ENCODE measurements at regions of chr11 and their contacts with region 1.

Region 1: DNA sequence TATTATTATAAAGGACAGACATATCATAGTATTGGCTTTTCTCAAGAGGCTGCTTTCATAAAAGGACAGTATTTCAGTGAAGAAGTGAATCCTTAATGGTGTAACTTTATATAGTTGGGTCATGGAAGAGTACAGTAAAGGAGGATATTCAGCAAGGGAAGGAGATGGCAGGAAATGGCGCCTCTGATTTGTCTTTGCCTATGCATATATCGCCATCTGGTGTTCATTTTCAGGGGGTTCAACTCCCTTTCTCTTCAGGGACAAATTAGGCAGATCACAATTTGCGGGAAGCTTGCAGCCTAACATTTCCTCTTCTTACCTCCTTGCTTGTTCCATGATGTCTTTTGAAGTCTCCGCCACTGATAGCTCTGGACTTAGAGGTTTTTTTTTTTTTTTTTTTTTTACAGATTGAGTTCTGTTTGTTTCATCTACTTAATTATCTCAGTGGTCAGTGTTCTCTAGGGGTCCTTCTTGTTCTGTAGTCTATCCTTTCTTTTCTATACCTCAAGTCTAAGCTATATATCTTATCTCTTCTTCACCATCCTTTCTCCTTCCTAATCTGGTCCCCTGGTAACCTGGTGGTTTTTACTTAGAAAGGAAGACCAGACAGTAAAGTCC is 21.8 kb upstream of the RRM1 start:
- DNase-seq: peak; percentile 81
- H3K4me3 Mint-ChIP-seq: no peak overlapping the region
- H3K27ac Mint-ChIP-seq: no peak overlapping the region
- H3K4me1 Mint-ChIP-seq: peaks cover 10% of the 10 kb centered on the region
- H3K27me3 Mint-ChIP-seq: no peaks in the 10 kb centered on the region
- CTCF ChIP-seq: peak; percentile 73

Region 2: DNA sequence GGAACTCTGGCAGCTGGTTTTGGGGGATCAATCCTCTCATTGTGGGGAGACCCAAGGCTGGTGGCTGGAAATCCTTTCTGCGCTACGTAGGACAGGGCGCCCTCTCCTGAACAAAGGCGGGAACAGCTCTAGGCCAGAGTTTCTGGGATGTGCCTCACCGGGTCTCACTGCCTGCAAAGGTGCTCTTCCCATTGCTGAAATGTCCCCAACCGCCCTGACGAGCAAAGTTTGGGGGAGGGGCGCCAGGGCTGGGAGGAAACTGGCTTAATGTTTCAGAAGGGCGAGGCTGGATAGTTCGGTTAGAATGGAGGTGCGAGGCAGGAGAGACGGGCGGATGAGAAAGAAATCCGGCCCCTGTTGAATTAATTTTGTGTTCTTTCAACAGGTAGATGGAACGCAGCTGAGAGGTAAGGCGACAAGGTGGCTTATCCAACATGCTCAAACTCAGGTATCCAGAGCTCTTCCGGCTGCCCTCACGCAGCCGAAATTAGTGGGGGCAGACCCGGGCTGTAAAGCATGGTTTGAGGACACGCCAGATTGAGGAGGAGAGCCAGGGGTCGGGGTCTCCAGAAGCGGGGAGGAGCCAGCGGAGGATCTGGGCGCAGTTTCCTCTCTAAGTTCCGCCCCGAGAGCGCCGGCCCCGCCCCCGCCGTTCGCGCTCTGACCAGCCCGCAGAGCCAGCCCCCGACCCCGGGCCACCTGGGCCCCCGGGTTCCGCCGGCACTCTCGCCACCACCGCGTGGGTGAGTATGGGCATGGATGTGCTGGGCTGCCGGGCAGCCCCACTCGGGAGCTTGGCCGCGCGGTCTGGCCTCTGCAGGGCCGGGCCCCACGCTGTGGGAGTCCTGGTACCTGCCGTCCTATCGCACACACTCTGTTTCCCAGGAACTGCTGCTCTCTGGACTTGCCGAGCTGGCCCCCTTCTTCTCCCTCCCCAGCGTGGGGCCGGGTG is 264.6 kb before region 1 on chr11 and contains the start of gene PGAP2:
- CTCF ChIA-PET with region 1: interaction called, 13 read pairs
- POLR2A ChIA-PET with region 1: interaction called, 4 read pairs
- intact Hi-C with region 1: no loop called
- DNase-seq: peak; percentile 77
- H3K4me3 Mint-ChIP-seq: peak within 1 kb of the TSS; percentile 81
- H3K27ac Mint-ChIP-seq: peak within 1 kb of the TSS; percentile 61
- H3K4me1 Mint-ChIP-seq: peaks cover 15% of the 10 kb centered on the region
- H3K27me3 Mint-ChIP-seq: no peaks in the 10 kb centered on the region
- CTCF ChIP-seq: peak; percentile 44
- total RNA-seq, gene PGAP2: 27.2 and 28.2 TPM in 2 replicates

Region 3: DNA sequence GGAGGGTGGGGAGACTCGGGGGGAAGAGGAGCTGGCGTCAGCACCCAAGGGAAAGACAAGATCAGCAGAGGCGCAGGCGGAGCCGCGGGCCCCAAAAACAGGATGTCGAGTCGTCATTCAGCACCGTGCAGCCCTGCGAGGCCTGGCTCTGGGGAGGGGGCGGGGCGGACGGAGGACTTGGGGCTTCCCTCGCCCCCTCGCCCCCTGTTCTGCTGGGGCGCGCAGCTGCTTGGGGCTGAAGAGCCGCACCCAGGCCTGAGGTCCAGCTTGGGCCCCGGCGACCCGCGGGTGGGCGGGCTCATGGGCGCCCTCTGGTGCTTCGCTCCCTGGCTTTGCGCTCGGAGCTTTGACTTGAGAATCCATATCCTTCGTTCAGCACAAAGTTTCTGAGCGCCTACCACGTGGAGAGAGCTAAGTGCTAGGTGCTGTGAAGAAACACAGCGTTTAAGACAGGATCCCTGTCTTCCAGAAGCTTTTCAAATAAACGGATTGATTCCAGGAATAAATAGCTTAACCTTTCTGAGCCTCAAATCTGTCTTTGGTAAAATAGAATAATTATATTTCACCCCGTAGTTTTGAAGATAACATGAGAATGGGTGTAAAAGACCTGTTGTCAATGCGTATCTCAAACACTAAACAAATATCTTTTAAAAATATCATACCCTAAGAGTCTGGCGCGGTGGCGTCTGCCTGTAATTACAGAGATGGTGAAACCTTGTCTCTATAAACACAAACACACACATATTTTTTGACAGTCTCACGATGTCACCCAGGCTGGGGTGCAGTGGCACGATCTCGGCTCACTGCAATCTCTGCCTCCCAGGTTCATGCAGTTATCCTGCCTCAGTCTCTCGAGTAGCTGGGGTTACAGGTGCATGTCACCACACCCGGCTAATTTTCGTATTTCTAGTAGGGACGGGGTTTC is 231.1 kb before region 1 on chr11:
- CTCF ChIA-PET with region 1: interaction called, 1,105 read pairs
- POLR2A ChIA-PET with region 1: interaction called, 13 read pairs
- intact Hi-C with region 1: no loop called
- DNase-seq: peak; percentile 88
- H3K4me3 Mint-ChIP-seq: peak overlapping the region; percentile 80
- H3K27ac Mint-ChIP-seq: peak overlapping the region; percentile 62
- H3K4me1 Mint-ChIP-seq: peaks cover 22% of the 10 kb centered on the region
- H3K27me3 Mint-ChIP-seq: no peaks in the 10 kb centered on the region
- CTCF ChIP-seq: peak; percentile 71

Region 4: GRCh38 chr11:3867209-3868091 is 205.3 kb before region 1 on chr11:
- CTCF ChIA-PET with region 1: interaction called, 19 read pairs
- POLR2A ChIA-PET with region 1: no interaction called
- intact Hi-C with region 1: no loop called
- DNase-seq: no peak
- H3K4me3 Mint-ChIP-seq: no peak overlapping the region
- H3K27ac Mint-ChIP-seq: no peak overlapping the region
- H3K4me1 Mint-ChIP-seq: peaks cover 15% of the 10 kb centered on the region
- H3K27me3 Mint-ChIP-seq: no peaks in the 10 kb centered on the region
- CTCF ChIP-seq: no peak

Region 5: GRCh38 chr11:3927133-3927796 is 145.5 kb before region 1 on chr11:
- CTCF ChIA-PET with region 1: interaction called, 28 read pairs
- POLR2A ChIA-PET with region 1: no interaction called
- intact Hi-C with region 1: no loop called
- DNase-seq: no peak
- H3K4me3 Mint-ChIP-seq: no peak overlapping the region
- H3K27ac Mint-ChIP-seq: no peak overlapping the region
- H3K4me1 Mint-ChIP-seq: no peaks in the 10 kb centered on the region
- H3K27me3 Mint-ChIP-seq: no peaks in the 10 kb centered on the region
- CTCF ChIP-seq: no peak

Region 6: DNA sequence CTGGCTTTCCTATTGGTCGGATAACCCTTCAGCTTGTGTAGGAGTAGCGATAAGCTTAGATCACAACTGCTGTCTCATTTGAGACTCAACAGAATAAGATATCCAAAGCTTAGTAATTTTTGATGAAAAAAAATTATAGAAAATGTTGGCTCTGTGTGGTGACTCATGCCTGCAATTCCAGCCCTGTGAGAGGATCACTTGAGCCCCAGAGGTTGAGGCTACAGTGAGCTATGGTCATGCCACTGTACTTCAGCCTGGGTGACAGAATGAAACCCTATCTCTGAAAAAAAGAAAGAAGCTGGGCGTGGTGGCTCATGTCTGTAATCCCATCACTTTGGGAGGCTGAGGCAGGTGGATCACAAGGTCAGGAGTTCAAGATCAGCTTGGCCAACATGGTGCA is 33.8 kb before region 1 on chr11:
- CTCF ChIA-PET with region 1: interaction called, 14 read pairs
- POLR2A ChIA-PET with region 1: interaction called, 5 read pairs
- intact Hi-C with region 1: no loop called
- DNase-seq: no peak
- H3K4me3 Mint-ChIP-seq: no peak overlapping the region
- H3K27ac Mint-ChIP-seq: no peak overlapping the region
- H3K4me1 Mint-ChIP-seq: peaks cover 4% of the 10 kb centered on the region
- H3K27me3 Mint-ChIP-seq: no peaks in the 10 kb centered on the region
- CTCF ChIP-seq: no peak

Region 7: GRCh38 chr11:4087551-4087950 is 14.8 kb after region 1 on chr11:
- CTCF ChIA-PET with region 1: interaction called, 67 read pairs
- POLR2A ChIA-PET with region 1: no interaction called
- intact Hi-C with region 1: no loop called
- DNase-seq: no peak
- H3K4me3 Mint-ChIP-seq: no peak overlapping the region
- H3K27ac Mint-ChIP-seq: no peak overlapping the region
- H3K4me1 Mint-ChIP-seq: no peaks in the 10 kb centered on the region
- H3K27me3 Mint-ChIP-seq: no peaks in the 10 kb centered on the region
- CTCF ChIP-seq: peak; percentile 7

Region 8: GRCh38 chr11:4105916-4106315 is 33.1 kb after region 1 on chr11:
- CTCF ChIA-PET with region 1: no interaction called
- POLR2A ChIA-PET with region 1: no interaction called
- intact Hi-C with region 1: no loop called
- DNase-seq: no peak
- H3K4me3 Mint-ChIP-seq: no peak overlapping the region
- H3K27ac Mint-ChIP-seq: no peak overlapping the region
- H3K4me1 Mint-ChIP-seq: peaks cover 3% of the 10 kb centered on the region
- H3K27me3 Mint-ChIP-seq: no peaks in the 10 kb centered on the region
- CTCF ChIP-seq: no peak

Region 9: DNA sequence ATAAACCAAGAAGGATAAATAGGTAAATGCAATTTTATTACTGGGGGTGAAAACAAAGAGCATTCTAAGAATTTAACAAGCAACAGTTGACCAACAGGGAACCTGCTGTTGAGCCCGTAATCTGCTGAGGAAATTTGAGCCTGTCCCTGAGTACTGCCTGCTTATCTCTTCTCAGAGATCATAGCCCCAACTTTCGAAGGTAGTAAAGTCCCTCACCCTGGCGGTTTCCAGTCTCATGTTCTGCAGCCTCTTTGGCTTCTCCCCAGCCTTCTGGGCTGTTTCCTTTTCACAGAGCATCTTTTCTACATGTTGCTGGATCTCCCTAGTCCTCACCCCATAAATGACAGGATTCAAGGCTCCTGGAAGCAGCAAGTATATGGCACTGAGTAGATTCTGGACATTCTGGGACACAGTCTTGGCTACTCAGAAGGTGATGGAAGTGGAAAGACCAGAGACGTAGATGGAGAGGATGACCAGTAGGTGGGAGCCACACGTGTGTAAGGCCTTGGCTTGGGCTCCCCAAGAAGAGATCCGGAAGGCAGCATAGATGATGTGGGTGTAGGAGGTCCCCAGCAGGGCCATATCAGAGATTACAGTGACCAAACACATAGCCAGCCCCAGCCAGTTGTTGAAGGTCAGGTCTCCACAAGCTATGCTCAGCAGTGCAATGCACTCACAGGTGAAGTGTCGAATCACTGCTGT is 73.4 kb after region 1 on chr11:
- CTCF ChIA-PET with region 1: no interaction called
- POLR2A ChIA-PET with region 1: no interaction called
- intact Hi-C with region 1: no loop called
- DNase-seq: no peak
- H3K4me3 Mint-ChIP-seq: no peak overlapping the region
- H3K27ac Mint-ChIP-seq: no peak overlapping the region
- H3K4me1 Mint-ChIP-seq: no peaks in the 10 kb centered on the region
- H3K27me3 Mint-ChIP-seq: no peaks in the 10 kb centered on the region
- CTCF ChIP-seq: no peak

Region 10: DNA sequence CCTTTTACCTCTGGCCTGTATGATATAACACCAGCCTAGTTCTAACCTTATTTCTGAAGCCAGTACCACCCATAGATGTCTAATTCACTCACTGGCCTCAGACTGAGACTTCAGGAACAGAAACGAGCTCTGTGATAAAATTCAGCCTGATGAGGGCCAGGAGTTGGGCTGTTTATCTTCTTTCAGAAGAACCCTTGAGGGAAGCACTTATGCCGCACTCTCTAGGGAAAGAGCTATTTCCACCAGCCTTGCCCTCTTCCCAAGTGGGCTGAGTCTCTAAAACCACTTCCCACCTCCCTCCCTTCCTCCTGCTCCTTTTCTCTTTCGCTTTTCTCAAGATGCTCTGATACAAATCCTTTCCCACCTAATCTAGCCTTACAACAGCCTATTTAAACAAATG is 297.4 kb after region 1 on chr11:
- CTCF ChIA-PET with region 1: no interaction called
- POLR2A ChIA-PET with region 1: no interaction called
- intact Hi-C with region 1: no loop called
- DNase-seq: no peak
- H3K4me3 Mint-ChIP-seq: no peak overlapping the region
- H3K27ac Mint-ChIP-seq: no peak overlapping the region
- H3K4me1 Mint-ChIP-seq: no peaks in the 10 kb centered on the region
- H3K27me3 Mint-ChIP-seq: no peaks in the 10 kb centered on the region
- CTCF ChIP-seq: no peak

Measured in MCF 10A (cell line).